ENCODE measurements at regions of chr12 and their contacts with region 1.

Region 1: DNA sequence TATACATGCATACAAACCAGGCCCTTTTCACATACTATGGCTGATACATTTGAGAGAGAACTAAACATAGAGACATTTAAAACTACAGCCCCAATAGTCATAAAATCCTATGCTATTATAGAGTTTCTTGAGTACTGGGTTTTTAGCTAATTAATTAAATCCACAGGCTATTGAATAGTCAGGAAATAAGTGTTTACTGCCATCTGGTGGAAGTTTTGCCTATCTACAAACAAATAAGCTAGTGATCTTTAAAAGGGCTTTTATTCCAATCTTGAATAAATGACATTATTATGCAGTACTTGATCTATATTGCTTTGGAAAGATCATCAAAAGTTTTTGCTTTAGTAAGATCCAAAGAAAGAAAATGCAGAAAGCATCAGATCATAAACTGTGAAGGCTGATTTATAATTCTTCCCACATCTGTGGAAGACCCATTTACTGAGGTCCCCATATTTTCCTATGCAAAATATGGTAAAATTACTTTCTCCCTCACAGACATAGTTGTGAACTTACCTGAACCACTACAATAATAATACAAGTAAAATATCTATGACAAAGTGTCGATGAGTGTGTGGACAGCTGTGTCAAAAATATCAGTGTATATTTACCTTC is 131.3 kb downstream of the ITPR2 start:
- DNase-seq: peak; percentile 80
- ATAC-seq: no peak
- H3K4me3 ChIP-seq: no peak overlapping the region
- H3K27ac ChIP-seq: no peak overlapping the region
- H3K4me1 ChIP-seq: peaks cover 29% of the 10 kb centered on the region
- H3K27me3 ChIP-seq: no peaks in the 10 kb centered on the region
- CTCF ChIP-seq: peak; percentile 95

Region 2: GRCh38 chr12:26434299-26435068 is 267.2 kb before region 1 on chr12:
- CTCF ChIA-PET with region 1: interaction called, 4 read pairs
- POLR2A ChIA-PET with region 1: no interaction called
- intact Hi-C with region 1: loop called (anchors 1 kb)
- DNase-seq: peak; percentile 90
- ATAC-seq: peak; percentile 99
- H3K4me3 ChIP-seq: no peak overlapping the region
- H3K27ac ChIP-seq: no peak overlapping the region
- H3K4me1 ChIP-seq: no peaks in the 10 kb centered on the region
- H3K27me3 ChIP-seq: no peaks in the 10 kb centered on the region
- CTCF ChIP-seq: peak; percentile 97

Region 3: GRCh38 chr12:26629864-26630263 is 71.8 kb before region 1 on chr12:
- CTCF ChIA-PET with region 1: interaction called, 39 read pairs
- POLR2A ChIA-PET with region 1: no interaction called
- intact Hi-C with region 1: loop called (anchors 1 kb)
- DNase-seq: peak; percentile 41
- ATAC-seq: peak; percentile 28; the same call in 1 of the 2 replicates
- H3K4me3 ChIP-seq: 0 out of 2 replicates have a peak overlapping the region, but pooled peaks have one; percentile 8
- H3K27ac ChIP-seq: peak overlapping the region; percentile 46
- H3K4me1 ChIP-seq: peaks cover 55% of the 10 kb centered on the region
- H3K27me3 ChIP-seq: no peaks in the 10 kb centered on the region
- CTCF ChIP-seq: peak; percentile 79

Region 4: GRCh38 chr12:26651566-26652188 is 50.0 kb before region 1 on chr12:
- CTCF ChIA-PET with region 1: interaction called, 28 read pairs
- POLR2A ChIA-PET with region 1: interaction called, 3 read pairs
- intact Hi-C with region 1: loop called (anchors 1 kb)
- DNase-seq: peak; percentile 97
- ATAC-seq: peak; percentile 85
- H3K4me3 ChIP-seq: no peak overlapping the region
- H3K27ac ChIP-seq: no peak overlapping the region
- H3K4me1 ChIP-seq: peaks cover 22% of the 10 kb centered on the region
- H3K27me3 ChIP-seq: no peaks in the 10 kb centered on the region
- CTCF ChIP-seq: peak; percentile 99

Region 5: DNA sequence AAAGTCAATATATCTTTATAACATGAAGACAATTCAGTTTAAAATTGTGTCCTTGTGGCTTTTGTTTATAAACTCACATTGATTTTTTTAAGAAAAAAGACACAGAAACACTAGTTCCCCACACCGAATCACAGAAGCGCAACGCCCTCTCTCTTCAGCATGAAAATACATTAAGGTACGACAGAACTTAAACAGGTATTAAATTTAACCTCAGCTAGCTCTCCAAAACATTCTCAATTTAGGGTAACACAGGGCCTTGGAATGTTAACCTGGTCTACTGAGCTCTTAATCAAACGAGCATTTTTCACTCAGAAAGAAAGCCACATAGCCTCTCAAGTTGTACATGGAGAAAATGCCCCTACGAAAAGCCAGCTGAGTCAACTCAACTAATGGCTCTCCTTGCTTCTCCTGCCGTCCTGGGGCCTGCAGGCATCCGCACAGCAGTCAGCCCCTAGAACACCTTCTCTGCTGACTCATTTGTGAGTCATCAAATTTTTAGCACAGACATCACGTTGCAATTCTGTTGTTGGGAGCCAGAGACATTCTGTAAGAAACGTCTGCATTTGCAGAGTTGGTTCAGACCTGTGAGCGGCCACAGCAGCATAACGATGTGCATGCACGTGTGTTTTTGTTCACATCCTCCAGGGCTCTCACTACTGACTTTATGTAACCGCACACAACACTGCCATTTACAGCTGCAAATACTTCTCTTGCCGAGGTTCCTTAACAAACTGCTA is 10.3 kb before region 1 on chr12:
- CTCF ChIA-PET with region 1: no interaction called
- POLR2A ChIA-PET with region 1: no interaction called
- intact Hi-C with region 1: loop called (anchors 1 kb)
- DNase-seq: peak; percentile 100
- ATAC-seq: peak; percentile 92
- H3K4me3 ChIP-seq: peak overlapping the region; percentile 39
- H3K27ac ChIP-seq: peak overlapping the region; percentile 48
- H3K4me1 ChIP-seq: peaks cover 47% of the 10 kb centered on the region
- H3K27me3 ChIP-seq: no peaks in the 10 kb centered on the region
- CTCF ChIP-seq: no peak

Region 6: DNA sequence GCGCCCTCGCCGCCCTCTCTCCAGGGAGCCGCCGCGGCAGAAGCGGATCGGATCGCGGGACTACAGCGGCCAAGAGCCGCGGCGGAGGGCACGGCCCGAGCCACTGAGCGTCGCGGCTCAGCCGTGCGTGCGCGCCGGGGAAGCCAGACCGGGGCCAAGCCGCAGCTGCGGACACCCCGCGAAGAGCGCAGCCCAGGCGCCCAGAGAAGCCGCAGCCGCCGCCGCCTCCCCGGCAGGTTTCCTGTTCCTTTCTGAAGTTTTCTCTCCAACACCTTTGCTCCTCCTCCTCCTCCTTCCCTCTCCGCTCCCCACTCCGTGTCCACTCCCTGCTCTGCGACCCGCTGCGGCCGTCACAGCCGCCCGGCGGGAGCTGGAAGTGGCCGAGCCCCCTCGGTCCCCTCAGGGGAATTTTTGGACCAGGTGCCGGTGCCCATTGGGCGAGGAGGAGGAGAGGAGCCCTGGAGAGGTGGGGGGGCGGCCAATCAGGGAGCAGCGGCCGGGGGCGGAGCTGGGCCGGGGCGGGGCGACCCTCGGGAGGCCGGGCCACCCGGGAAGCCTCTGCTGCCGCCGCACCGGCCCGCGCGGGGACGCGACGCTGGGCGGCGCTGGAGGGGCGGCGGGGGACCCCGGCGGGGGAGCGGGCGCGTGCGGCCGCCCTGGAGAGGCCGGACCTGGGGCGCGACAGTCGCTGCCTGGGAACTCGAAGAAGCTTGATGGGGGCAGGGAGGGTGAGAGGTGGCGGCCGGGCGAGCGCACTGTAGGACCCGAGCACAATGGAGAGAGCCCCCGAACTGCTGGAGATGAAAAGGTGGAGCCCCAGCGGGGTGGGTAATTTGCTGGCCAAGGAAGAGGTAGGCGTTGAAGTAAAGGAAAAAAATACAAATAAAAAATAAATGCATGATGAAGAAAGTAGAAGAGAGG is 131.4 kb after region 1 on chr12 and contains the start of gene ITPR2:
- CTCF ChIA-PET with region 1: interaction called, 7 read pairs
- POLR2A ChIA-PET with region 1: no interaction called
- intact Hi-C with region 1: loop called (anchors 1 kb)
- DNase-seq: peak; percentile 97
- ATAC-seq: peak; percentile 85
- H3K4me3 ChIP-seq: peak within 1 kb of the TSS; percentile 81
- H3K27ac ChIP-seq: peak within 1 kb of the TSS; percentile 53
- H3K4me1 ChIP-seq: peaks cover 6% of the 10 kb centered on the region; the same call in 1 of the 2 replicates
- H3K27me3 ChIP-seq: no peaks in the 10 kb centered on the region
- CTCF ChIP-seq: peak; percentile 40; the same call in 1 of the 2 replicates
- total RNA-seq, gene ITPR2: 4.0 and 10.2 TPM in 2 replicates

Region 7: DNA sequence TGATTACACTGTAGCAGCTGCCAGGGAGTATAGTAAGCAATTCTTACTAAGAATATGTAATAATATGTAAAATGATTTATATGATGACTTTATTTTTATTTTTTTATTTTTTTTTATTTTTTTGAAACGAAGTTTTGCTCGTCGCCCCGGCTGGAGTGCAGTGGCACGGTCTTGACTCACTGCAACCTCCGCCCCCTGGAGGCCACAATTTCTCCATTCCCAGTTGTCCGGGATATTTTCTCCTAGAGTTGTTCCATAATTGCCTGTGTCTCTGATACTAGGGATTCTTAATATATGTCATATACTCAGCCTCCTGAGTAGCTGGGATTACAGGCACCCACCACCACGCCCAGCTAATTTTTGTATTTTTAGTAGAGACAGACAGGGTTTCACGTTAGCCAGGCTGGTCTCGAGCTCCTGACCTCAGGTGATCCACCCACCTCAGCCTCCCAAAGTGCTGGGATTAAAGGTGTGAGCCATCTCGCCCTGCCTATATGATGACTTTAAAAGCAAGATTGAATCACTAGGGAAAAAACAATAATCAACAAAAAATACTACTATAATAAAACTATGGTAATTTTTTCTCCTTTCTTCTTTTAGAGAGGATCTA is 143.5 kb after region 1 on chr12:
- CTCF ChIA-PET with region 1: interaction called, 3 read pairs
- POLR2A ChIA-PET with region 1: no interaction called
- intact Hi-C with region 1: loop called (anchors 1 kb)
- DNase-seq: peak; percentile 78
- ATAC-seq: peak; percentile 95
- H3K4me3 ChIP-seq: no peak overlapping the region
- H3K27ac ChIP-seq: no peak overlapping the region
- H3K4me1 ChIP-seq: no peaks in the 10 kb centered on the region
- H3K27me3 ChIP-seq: no peaks in the 10 kb centered on the region
- CTCF ChIP-seq: peak; percentile 70

Measured in PC-3 (cell line).